Mammary epithelial cell (primary cell): ENCODE measurements at regions of chr19 and their contacts with region 1.

Region 1: DNA sequence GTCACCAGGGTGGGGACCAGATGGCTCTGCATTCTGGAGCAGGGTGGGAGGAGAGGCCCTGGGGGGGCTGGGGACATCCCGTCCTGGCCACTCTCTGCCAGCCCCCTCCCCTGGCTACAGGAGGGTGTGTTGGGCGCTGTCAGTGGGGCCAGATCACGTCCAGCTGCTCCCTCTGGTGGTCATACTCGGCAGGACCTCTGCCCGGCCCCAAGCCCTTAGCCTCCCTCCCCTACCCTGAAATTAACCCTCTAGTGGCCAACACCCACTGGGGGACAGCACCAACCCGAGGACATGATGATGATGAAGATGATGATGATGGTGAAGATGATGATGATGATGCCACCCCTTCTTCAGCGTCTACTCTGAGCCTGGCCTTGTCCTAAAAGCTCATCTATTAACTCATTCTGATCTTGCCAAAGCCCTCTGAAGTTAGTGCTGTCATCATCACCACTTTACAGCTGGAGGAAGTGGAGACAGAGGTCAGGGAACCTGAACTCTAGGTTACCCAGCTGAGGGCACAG is 590 bp upstream of the LGI4 start:
- DNase-seq: no peak
- H3K4me3 ChIP-seq: no peak overlapping the region
- H3K27ac ChIP-seq: no peak overlapping the region
- H3K4me1 ChIP-seq: peaks cover 12% of the 10 kb centered on the region
- H3K27me3 ChIP-seq: no peaks in the 10 kb centered on the region
- CTCF ChIP-seq: peak; percentile 67 to 90

Region 2: GRCh38 chr19:34974646-34975045 is 160.8 kb before region 1 on chr19:
- CTCF ChIA-PET with region 1: no interaction called
- dilution Hi-C with region 1: loop called (anchors 5 kb)
- in situ Hi-C with region 1: no loop called
- intact Hi-C with region 1: no loop called
- DNase-seq: no peak
- H3K4me3 ChIP-seq: no peak overlapping the region
- H3K27ac ChIP-seq: no peak overlapping the region
- H3K4me1 ChIP-seq: no peaks in the 10 kb centered on the region
- H3K27me3 ChIP-seq: no peaks in the 10 kb centered on the region
- CTCF ChIP-seq: no peak

Region 3: DNA sequence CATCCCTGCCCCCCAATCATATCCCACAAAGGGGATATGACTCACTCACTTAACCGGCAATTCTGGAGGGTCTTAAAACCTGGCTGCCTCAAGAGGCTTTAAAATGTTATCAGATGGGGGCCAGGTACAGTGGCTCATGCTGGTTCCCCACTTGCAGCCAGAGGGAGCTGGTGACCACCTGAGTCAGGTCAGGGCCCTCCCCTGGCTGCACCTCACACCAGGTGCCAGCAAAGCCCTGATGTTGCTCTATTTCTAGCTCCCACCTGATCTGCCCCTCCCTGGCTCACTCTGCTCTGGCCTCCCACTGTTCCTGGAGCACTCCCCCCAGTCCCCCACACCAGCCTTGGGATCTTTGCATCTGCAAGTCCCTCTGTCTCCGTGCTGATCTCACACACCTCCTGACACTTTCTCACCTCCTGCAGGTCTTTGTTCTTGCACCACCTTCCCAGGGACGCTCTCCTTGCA is 79.7 kb before region 1 on chr19:
- CTCF ChIA-PET with region 1: no interaction called
- dilution Hi-C with region 1: loop called (anchors 5 kb)
- in situ Hi-C with region 1: no loop called
- intact Hi-C with region 1: no loop called
- DNase-seq: no peak
- H3K4me3 ChIP-seq: no peak overlapping the region
- H3K27ac ChIP-seq: no peak overlapping the region
- H3K4me1 ChIP-seq: no peaks in the 10 kb centered on the region
- H3K27me3 ChIP-seq: no peaks in the 10 kb centered on the region
- CTCF ChIP-seq: peak; percentile 31 to 50

Region 4: GRCh38 chr19:35114353-35115176 is 20.9 kb before region 1 on chr19:
- CTCF ChIA-PET with region 1: no interaction called
- dilution Hi-C with region 1: no loop called
- in situ Hi-C with region 1: no loop called
- intact Hi-C with region 1: loop called (anchors 1 kb)
- DNase-seq: peak; percentile 68
- H3K4me3 ChIP-seq: peak overlapping the region; percentile 75 to 94 (median 89)
- H3K27ac ChIP-seq: peak overlapping the region; percentile 91
- H3K4me1 ChIP-seq: peaks cover 50% of the 10 kb centered on the region
- H3K27me3 ChIP-seq: no peaks in the 10 kb centered on the region
- CTCF ChIP-seq: peak; percentile 99 to 100

Region 5: DNA sequence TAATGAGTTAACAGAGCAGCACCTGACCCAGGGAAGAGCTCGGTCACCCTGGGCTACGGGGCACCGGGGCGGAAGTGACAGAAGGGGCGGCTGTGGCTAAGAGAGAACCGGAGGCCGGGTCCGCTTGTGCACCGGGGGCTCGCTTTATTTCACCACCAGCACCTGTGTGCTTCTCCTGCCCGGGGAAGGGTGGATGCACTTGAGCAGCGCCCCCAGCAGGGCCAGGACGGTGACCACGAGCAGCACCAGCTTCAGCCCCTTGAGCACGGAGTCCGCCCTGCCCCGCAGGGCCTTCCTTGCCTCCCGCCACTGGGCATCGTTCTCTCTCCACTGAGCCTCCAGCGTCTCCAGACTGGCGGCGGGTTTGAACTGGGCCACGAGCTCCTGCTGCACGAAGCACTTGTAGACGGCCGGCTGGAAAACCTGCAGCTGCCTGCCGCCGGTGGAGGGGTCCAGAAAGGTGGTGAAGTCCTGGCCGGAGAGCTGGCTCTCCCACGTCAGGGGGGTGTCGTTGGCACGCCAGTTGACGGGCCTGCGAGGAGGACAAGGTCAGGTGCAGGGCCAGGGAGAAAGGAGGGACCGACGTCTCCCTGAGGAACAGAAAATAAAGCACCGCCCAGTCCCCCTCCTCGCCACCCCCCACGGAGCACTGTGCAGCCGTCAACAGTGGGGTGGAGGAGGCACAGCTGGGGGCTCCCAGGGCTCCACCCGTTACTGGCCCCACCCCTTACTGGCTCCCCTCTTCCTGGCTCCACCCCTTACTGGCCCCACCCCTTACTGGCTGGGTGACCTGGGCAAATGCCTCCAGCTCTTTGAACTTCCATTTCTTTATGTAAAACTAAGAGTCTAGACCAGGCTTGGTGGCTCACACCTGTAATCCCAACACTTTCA is 89.5 kb after region 1 on chr19:
- CTCF ChIA-PET with region 1: no interaction called
- dilution Hi-C with region 1: loop called (anchors 5 kb)
- in situ Hi-C with region 1: no loop called
- intact Hi-C with region 1: no loop called
- DNase-seq: no peak
- H3K4me3 ChIP-seq: no peak overlapping the region
- H3K27ac ChIP-seq: no peak overlapping the region
- H3K4me1 ChIP-seq: no peaks in the 10 kb centered on the region
- H3K27me3 ChIP-seq: no peaks in the 10 kb centered on the region
- CTCF ChIP-seq: no peak